ENCODE measurements at regions of chr3 and their contacts with region 1.

Region 1: GRCh38 chr3:57227204-57227929 is at the start of gene APPL1:
- DNase-seq: peak; percentile 79 to 89 (median 84)
- H3K4me3 ChIP-seq: peak within 1 kb of the TSS; percentile 40 to 85
- H3K4me3 Mint-ChIP-seq: peak within 1 kb of the TSS; percentile 89 to 98 (median 94)
- H3K27ac ChIP-seq: peak within 1 kb of the TSS; percentile 45
- H3K27ac Mint-ChIP-seq: peak within 1 kb of the TSS; percentile 70 to 93 (median 86)
- H3K4me1 ChIP-seq: peaks cover 26% of the 10 kb centered on the region
- H3K4me1 Mint-ChIP-seq: peaks cover 12 to 35% (median 25%) of the 10 kb centered on the region in 4 donors
- H3K27me3 ChIP-seq: no peaks in the 10 kb centered on the region
- H3K27me3 Mint-ChIP-seq: no peaks in the 10 kb centered on the region
- total RNA-seq, gene APPL1: 30.9 to 33.6 TPM

Region 2: GRCh38 chr3:56682462-56683121 is 544.8 kb before region 1 on chr3:
- CTCF ChIA-PET with region 1: no interaction called
- POLR2A ChIA-PET with region 1: no interaction called
- intact Hi-C with region 1: loop called (anchors 10 kb)
- DNase-seq: peak; percentile 79 to 86 (median 85)
- H3K4me3 ChIP-seq: peak overlapping the region; percentile 76 to 90
- H3K4me3 Mint-ChIP-seq: peak overlapping the region; percentile 91 to 98 (median 94)
- H3K27ac ChIP-seq: peak overlapping the region; percentile 96
- H3K27ac Mint-ChIP-seq: peak overlapping the region; percentile 93 to 98 (median 96)
- H3K4me1 ChIP-seq: peaks cover 55% of the 10 kb centered on the region
- H3K4me1 Mint-ChIP-seq: peaks cover 28 to 59% (median 42%) of the 10 kb centered on the region in 4 donors
- H3K27me3 ChIP-seq: no peaks in the 10 kb centered on the region
- H3K27me3 Mint-ChIP-seq: no peaks in the 10 kb centered on the region

Region 3: GRCh38 chr3:57169872-57170623 is 57.3 kb before region 1 on chr3:
- CTCF ChIA-PET with region 1: interaction called, 7 read pairs
- POLR2A ChIA-PET with region 1: no interaction called
- intact Hi-C with region 1: loop called (anchors 1 kb)
- DNase-seq: peak in 4 of 5 donors; percentile 37 to 45 (median 41)
- H3K4me3 ChIP-seq: peak overlapping the region in 1 of 2 donors; percentile 27
- H3K4me3 Mint-ChIP-seq: peak overlapping the region; percentile 10 to 74 (median 50)
- H3K27ac ChIP-seq: no peak overlapping the region
- H3K27ac Mint-ChIP-seq: no peak overlapping the region
- H3K4me1 ChIP-seq: peaks cover 3% of the 10 kb centered on the region
- H3K4me1 Mint-ChIP-seq: peaks cover 4 to 11% (median 6%) of the 10 kb centered on the region in 4 donors
- H3K27me3 ChIP-seq: peaks cover 10% of the 10 kb centered on the region
- H3K27me3 Mint-ChIP-seq: peaks cover 31 to 44% of the 10 kb centered on the region in 2 donors

Region 4: DNA sequence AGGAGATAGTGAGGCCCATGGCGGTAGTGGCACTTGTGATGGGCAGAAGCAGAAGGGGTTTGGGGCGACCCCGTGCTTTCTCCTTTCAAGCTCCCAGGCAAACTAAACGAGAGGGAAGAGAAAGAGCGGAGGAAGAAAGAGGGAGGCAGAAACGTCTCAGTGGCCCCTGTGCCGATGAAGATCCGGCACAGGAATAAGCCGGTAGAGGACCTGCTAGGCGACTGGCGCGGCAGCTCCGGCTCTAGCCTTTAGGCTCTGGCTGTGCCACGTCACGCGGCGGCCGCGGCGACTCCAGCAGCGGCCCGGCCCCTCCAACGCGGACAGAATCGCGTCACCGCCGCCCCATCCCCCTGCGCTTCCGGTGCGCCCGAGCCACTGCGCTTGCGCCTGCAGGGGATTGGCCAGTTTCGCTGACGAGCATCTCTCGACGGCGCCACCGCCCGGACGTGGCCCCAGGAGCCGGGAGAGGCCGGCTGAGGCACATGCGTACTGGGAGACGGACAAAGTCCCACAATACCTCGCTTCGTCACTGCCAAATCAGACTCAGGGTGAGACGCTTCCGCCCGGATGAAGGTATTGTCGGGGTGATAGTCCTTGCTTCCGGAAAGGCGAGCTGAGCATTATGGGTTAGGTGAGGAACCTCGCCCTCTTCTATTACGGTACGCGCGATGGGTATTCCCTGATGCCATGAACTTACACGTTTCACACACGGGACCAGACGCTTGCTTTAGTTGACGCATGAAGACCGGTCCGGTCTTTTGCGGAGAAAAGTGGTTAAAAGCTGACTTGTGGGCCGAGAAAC is 370.0 kb after region 1 on chr3 and contains the start of gene ARF4:
- CTCF ChIA-PET with region 1: no interaction called
- POLR2A ChIA-PET with region 1: interaction called, 7 read pairs
- intact Hi-C with region 1: loop called (anchors 1 kb)
- DNase-seq: peak; percentile 100
- H3K4me3 ChIP-seq: peak within 1 kb of the TSS; percentile 72 to 95
- H3K4me3 Mint-ChIP-seq: peak within 1 kb of the TSS; percentile 85 to 99 (median 99)
- H3K27ac ChIP-seq: peak within 1 kb of the TSS; percentile 100
- H3K27ac Mint-ChIP-seq: peak within 1 kb of the TSS; percentile 99 to 100 (median 100)
- H3K4me1 ChIP-seq: peaks cover 62% of the 10 kb centered on the region
- H3K4me1 Mint-ChIP-seq: peaks cover 34 to 72% (median 48%) of the 10 kb centered on the region in 4 donors
- H3K27me3 ChIP-seq: no peaks in the 10 kb centered on the region
- H3K27me3 Mint-ChIP-seq: no peaks in the 10 kb centered on the region
- total RNA-seq, gene ARF4: 55.8 to 58.5 TPM

Region 5: GRCh38 chr3:57755668-57756527 is 528.5 kb after region 1 on chr3 and contains the start of gene SLMAP:
- CTCF ChIA-PET with region 1: no interaction called
- POLR2A ChIA-PET with region 1: no interaction called
- intact Hi-C with region 1: loop called (anchors 1 kb)
- DNase-seq: peak; percentile 94 to 98 (median 95)
- H3K4me3 ChIP-seq: peak within 1 kb of the TSS; percentile 40 to 81
- H3K4me3 Mint-ChIP-seq: peak within 1 kb of the TSS; percentile 96 to 99 (median 98)
- H3K27ac ChIP-seq: peak within 1 kb of the TSS; percentile 77
- H3K27ac Mint-ChIP-seq: peak within 1 kb of the TSS; percentile 86 to 98 (median 96)
- H3K4me1 ChIP-seq: peaks cover 39% of the 10 kb centered on the region
- H3K4me1 Mint-ChIP-seq: peaks cover 19 to 49% (median 35%) of the 10 kb centered on the region in 4 donors
- H3K27me3 ChIP-seq: no peaks in the 10 kb centered on the region
- H3K27me3 Mint-ChIP-seq: no peaks in the 10 kb centered on the region
- total RNA-seq, gene SLMAP: 58.6 to 69.0 TPM

Measured in CD4-positive, alpha-beta memory T cell (primary cell).